Right cardiac atrium (tissue), 5 donors: ENCODE measurements at regions of chr3 and their contacts with region 1.

Region 1: DNA sequence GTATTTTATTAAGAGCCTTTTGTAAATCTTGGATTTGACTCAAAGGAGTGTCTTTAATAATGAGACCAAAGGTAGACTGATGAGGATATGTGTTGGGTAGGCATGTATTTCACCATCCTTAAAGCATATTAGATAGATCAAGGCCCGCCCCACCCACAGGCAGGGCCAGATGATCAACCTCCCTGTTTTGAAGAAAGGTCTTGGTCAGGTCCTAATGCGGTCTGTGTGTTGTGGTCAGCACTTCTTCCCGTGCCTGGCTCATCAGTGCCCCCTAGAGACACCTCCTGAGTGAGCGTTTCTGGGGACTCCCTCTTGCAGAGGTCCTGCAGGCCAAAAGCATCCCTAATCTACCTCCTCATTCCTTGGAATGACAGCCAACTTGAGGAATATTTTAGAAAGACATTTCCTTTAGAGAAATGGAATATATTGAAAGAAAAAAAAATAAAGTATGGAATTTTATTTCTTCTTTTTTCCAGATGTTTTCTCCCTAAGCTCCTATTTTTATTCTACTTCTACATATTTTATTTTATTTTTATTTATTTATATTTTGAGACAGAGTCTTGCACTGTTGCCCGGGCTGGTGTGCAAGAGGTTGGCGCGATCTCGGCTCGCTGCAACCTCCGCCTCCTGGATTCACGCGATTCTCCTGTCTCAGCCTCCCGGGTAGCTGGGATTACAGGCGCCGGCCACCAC is 6.0 kb downstream of the TM4SF4 start:
- DNase-seq: peak; percentile 83 to 90 (median 87)
- ATAC-seq: peak; percentile 93 to 95
- H3K4me3 ChIP-seq: no peak overlapping the region
- H3K27ac ChIP-seq: peak overlapping the region; percentile 70
- H3K4me1 ChIP-seq: peaks cover 5% of the 10 kb centered on the region
- H3K27me3 ChIP-seq: no peaks in the 10 kb centered on the region

Region 2: DNA sequence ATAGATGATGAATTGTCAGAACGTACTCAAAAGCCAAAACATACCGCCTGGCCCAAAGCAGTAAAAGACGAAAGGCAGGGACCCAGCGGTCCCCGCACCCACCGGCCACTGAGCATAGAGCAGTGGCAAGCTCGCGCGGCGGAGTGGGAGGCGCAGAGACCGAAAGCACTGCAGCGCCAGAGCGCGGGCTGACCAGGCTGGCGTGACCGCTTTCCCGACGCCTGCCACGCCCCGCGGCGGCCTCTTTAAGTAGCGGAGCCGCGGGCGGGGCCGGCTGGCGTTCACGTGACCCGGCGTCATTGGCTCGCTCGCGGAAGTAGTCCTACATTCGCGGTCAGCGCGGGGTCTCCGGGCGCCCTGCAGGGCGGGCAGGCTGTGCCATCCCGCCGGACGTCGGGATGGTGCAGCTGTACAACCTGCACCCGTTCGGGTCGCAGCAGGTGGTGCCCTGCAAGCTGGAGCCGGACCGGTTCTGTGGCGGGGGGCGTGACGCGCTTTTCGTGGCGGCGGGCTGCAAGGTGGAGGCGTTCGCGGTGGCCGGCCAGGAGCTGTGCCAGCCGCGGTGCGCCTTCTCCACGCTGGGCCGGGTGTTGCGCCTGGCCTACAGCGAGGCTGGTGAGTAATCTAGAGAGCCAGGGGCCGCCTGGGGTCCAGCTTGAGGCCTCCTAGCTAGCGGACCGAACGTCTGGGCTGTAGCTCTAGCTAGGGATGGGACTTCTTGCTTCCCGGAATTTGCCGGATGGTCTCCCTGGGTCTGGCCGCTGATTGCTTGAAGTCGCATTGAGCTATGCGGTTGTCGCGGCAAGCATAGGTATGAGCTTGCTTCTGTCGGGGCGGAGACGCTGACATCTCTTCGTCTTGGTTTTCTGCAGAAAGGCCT is 350.9 kb before region 1 on chr3 and contains the start of gene HPS3:
- intact Hi-C with region 1: loop called in 2 of 4 experiments (anchors 10 kb)
- DNase-seq: peak; percentile 94 to 98 (median 97)
- ATAC-seq: peak; percentile 99
- H3K4me3 ChIP-seq: peak within 1 kb of the TSS; percentile 87
- H3K27ac ChIP-seq: peak within 1 kb of the TSS; percentile 78
- H3K4me1 ChIP-seq: no peaks in the 10 kb centered on the region
- H3K27me3 ChIP-seq: no peaks in the 10 kb centered on the region
- total RNA-seq, gene HPS3: 7.4 to 9.7 (median 7.8) TPM

Region 3: GRCh38 chr3:149339931-149340309 is 140.6 kb before region 1 on chr3:
- intact Hi-C with region 1: loop called in 1 of 4 experiments (anchors 10 kb)
- DNase-seq: peak; percentile 90 to 94 (median 91)
- ATAC-seq: peak; percentile 97 to 99
- H3K4me3 ChIP-seq: no peak overlapping the region
- H3K27ac ChIP-seq: no peak overlapping the region
- H3K4me1 ChIP-seq: peaks cover 3% of the 10 kb centered on the region
- H3K27me3 ChIP-seq: no peaks in the 10 kb centered on the region

Region 4: DNA sequence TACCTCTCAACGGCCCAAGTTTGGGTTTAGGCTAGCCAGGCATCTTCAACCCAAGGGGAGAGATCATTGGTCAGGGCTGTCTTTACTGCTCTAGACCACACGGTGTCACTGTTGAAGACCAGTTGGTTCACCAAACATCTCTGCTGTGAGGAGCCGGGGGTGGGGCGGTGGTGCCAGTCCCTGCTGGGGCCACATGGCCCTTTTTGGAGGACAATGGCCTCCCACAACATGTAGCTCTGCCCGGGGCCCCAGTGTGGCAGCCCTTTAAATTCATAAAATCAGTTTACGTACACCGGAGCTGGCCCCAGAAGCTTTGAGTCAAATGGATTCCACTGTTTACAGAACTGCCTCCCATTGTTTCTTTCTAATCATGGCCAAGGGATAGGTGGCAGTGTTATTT is 127.9 kb before region 1 on chr3:
- intact Hi-C with region 1: loop called in 2 of 4 experiments (anchors 5 to 10 kb)
- DNase-seq: peak; percentile 69 to 82 (median 73)
- ATAC-seq: peak; percentile 76 to 86
- H3K4me3 ChIP-seq: no peak overlapping the region
- H3K27ac ChIP-seq: no peak overlapping the region
- H3K4me1 ChIP-seq: peaks cover 2% of the 10 kb centered on the region
- H3K27me3 ChIP-seq: no peaks in the 10 kb centered on the region

Region 5: DNA sequence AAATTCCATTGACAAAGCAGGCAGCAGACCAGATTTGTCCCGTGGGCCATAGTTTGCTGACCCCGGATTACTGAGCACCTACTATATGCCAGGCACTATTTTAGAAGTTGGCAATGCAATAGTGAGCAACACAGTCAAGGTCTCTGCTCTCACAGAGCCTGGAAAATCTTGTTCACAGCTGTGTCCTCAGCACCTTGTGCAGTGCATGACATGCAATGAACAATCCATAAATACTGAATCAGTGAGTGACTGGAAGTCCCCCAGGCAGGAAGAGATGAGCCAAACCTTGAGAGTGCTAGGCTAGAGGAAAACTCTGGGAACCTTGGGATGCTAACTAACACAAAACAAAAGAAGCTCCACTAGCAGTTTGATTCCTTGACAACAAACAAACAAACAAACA is 117.4 kb before region 1 on chr3:
- intact Hi-C with region 1: no loop called
- DNase-seq: no peak
- ATAC-seq: no peak
- H3K4me3 ChIP-seq: no peak overlapping the region
- H3K27ac ChIP-seq: no peak overlapping the region
- H3K4me1 ChIP-seq: no peaks in the 10 kb centered on the region
- H3K27me3 ChIP-seq: no peaks in the 10 kb centered on the region